CD14-positive monocyte (primary cell): ENCODE measurements at regions of chr16 and their contacts with region 1.

Region 1: GRCh38 chr16:67561824-67562525 is 351 bp upstream of the CTCF start:
- DNase-seq: peak; percentile 98 to 99 (median 98)
- H3K4me3 ChIP-seq: peak overlapping the region; percentile 54 to 89 (median 75)
- H3K4me3 Mint-ChIP-seq: peak overlapping the region; percentile 82 to 91
- H3K27ac ChIP-seq: peak overlapping the region; percentile 75 to 89
- H3K27ac Mint-ChIP-seq: peak overlapping the region; percentile 83 to 94 (median 91)
- H3K4me1 ChIP-seq: peaks cover 29 to 37% of the 10 kb centered on the region in 2 donors
- H3K4me1 Mint-ChIP-seq: peaks cover 36% of the 10 kb centered on the region
- H3K27me3 ChIP-seq: no peaks in the 10 kb centered on the region
- H3K27me3 Mint-ChIP-seq: peaks cover 0 to 2% (median 0%) of the 10 kb centered on the region in 3 donors
- CTCF ChIP-seq: no peak

Region 2: GRCh38 chr16:67490335-67491096 is 71.5 kb before region 1 on chr16:
- intact Hi-C with region 1: loop called in 1 of 2 experiments (anchors 5 kb)
- DNase-seq: peak; percentile 78 to 93 (median 87)
- H3K4me3 ChIP-seq: peak overlapping the region in 1 of 3 experiments; percentile 71
- H3K4me3 Mint-ChIP-seq: peak overlapping the region; percentile 59 to 82
- H3K27ac ChIP-seq: peak overlapping the region; percentile 90 to 97
- H3K27ac Mint-ChIP-seq: peak overlapping the region; percentile 98 to 100 (median 99)
- H3K4me1 ChIP-seq: peaks cover 84 to 93% of the 10 kb centered on the region in 2 donors
- H3K4me1 Mint-ChIP-seq: peaks cover 84% of the 10 kb centered on the region
- H3K27me3 ChIP-seq: no peaks in the 10 kb centered on the region
- H3K27me3 Mint-ChIP-seq: peaks cover 0 to 7% (median 0%) of the 10 kb centered on the region in 3 donors
- CTCF ChIP-seq: no peak

Region 3: DNA sequence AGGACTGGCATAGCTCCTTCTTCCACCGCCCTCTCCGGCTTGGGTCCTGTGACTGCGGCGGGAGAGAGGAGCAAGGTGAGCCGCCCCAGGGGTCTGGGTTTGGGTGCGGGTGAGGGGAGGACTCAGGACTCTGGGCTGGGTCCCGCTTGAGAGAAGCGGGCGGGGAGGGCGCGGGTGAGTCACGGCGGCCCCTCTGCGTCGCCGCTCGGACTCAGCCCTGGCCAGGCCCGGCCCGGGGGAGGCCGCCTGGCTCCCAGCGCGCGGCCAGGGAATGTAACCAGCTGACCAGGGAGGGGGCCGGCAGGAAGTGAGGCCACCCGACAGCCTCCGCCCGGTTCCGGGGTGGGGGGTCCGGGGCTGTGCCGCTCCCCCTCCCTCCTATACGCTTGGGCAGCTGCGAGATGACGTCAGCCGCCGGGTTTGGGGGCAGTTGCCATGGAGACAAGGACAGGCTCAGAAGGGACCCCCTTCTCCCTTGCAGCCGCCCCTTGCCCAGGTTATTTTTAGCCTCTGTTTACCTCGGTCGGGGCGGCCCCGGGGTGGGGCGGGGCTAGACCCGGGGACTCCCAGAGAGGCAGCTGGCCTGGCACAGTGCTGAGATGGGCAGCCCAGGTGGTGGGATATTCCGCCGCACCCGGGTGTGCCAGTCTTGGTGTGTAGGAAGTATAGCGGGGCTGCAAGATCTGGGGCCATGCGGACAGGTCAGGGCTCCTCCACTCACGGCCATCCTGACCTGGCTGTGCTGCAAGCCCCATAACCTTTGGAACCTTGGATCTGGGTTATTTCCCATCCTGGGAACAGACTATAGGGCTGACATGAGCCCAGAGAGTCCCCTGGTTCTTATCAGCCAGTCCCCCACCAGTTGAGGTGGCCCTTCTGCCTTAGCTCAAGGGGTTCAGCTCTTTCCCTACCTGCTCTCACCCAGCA is 31.7 kb before region 1 on chr16:
- intact Hi-C with region 1: loop called in 1 of 2 experiments (anchors 5 kb)
- DNase-seq: peak; percentile 68 to 81 (median 78)
- H3K4me3 ChIP-seq: peak overlapping the region; percentile 58 to 96 (median 88)
- H3K4me3 Mint-ChIP-seq: peak overlapping the region; percentile 94 to 100
- H3K27ac ChIP-seq: peak overlapping the region; percentile 95
- H3K27ac Mint-ChIP-seq: peak overlapping the region; percentile 96 to 98 (median 96)
- H3K4me1 ChIP-seq: peaks cover 40 to 67% of the 10 kb centered on the region in 2 donors
- H3K4me1 Mint-ChIP-seq: peaks cover 55% of the 10 kb centered on the region
- H3K27me3 ChIP-seq: peaks cover 0 to 1% of the 10 kb centered on the region in 2 donors
- H3K27me3 Mint-ChIP-seq: peaks cover 7 to 24% (median 16%) of the 10 kb centered on the region in 3 donors
- CTCF ChIP-seq: no peak

Region 4: GRCh38 chr16:67628216-67628615 is 66.2 kb after region 1 on chr16:
- intact Hi-C with region 1: no loop called
- DNase-seq: no peak
- H3K4me3 ChIP-seq: no peak overlapping the region
- H3K4me3 Mint-ChIP-seq: no peak overlapping the region
- H3K27ac ChIP-seq: no peak overlapping the region
- H3K27ac Mint-ChIP-seq: no peak overlapping the region
- H3K4me1 ChIP-seq: no peaks in the 10 kb centered on the region
- H3K4me1 Mint-ChIP-seq: no peaks in the 10 kb centered on the region
- H3K27me3 ChIP-seq: no peaks in the 10 kb centered on the region
- H3K27me3 Mint-ChIP-seq: peaks cover 0 to 3% (median 0%) of the 10 kb centered on the region in 3 donors
- CTCF ChIP-seq: no peak

Region 5: GRCh38 chr16:67660564-67661028 is 98.6 kb after region 1 on chr16 and contains the start of gene PARD6A:
- intact Hi-C with region 1: loop called (anchors 2 to 5 kb)
- DNase-seq: peak; percentile 95 to 96 (median 96)
- H3K4me3 ChIP-seq: peak within 1 kb of the TSS; percentile 74 to 92 (median 92)
- H3K4me3 Mint-ChIP-seq: peak within 1 kb of the TSS; percentile 90 to 92
- H3K27ac ChIP-seq: peak within 1 kb of the TSS; percentile 87 to 94
- H3K27ac Mint-ChIP-seq: peak within 1 kb of the TSS; percentile 96 to 99 (median 98)
- H3K4me1 ChIP-seq: peaks cover 20 to 30% of the 10 kb centered on the region in 2 donors
- H3K4me1 Mint-ChIP-seq: peaks cover 21% of the 10 kb centered on the region
- H3K27me3 ChIP-seq: peaks cover 0 to 5% of the 10 kb centered on the region in 2 donors
- H3K27me3 Mint-ChIP-seq: peaks cover 8 to 11% (median 10%) of the 10 kb centered on the region in 3 donors
- CTCF ChIP-seq: no peak
- polyA plus RNA-seq, gene PARD6A: 2.7 to 6.9 (median 6.1) TPM

Region 6: DNA sequence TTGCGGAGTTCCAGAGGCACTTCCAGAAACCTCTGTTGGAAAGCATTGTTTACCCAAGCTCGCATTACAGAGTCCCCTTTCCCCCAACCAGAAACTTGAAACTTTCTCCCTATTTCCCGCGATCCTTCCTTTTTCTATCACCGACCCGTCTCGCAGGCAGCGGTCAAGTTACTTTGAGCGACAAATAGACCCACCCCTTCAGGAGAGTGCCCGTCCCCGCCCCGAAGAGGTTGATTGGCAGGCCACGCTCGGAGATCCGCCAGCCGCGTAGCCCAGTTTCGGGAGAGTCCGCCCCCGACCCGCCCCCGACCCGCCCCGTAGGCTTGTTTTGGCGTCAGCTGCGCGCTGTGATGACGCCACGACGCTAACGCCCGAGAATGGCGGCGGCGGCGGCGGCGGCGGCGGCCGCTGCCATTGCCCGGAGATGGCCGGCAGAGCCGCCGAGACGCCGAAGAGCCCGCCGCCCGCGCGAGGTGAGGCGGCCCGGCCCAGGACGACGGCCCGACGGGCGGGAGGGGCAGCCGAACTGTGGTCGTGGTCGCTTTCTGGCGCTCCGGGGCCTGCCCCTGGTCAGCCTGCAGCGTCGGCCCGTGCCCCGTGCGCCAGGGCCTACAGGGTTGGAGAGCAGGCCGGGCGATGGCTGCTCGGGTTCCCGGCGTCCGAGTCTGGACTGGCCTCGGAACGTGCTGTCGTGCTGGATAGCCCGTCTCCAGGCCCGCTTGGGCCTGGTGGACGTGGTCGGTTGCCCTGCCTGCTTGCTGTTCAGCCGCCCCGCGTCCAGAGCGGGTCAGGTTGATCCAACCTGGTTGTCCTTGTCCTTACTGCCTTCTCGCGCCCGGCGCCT is 331.1 kb after region 1 on chr16 and contains the start of gene PSKH1:
- intact Hi-C with region 1: loop called in 1 of 2 experiments (anchors 5 kb)
- DNase-seq: peak; percentile 92 to 94 (median 93)
- H3K4me3 ChIP-seq: peak within 1 kb of the TSS; percentile 58 to 91 (median 90)
- H3K4me3 Mint-ChIP-seq: peak within 1 kb of the TSS; percentile 89 to 95
- H3K27ac ChIP-seq: peak within 1 kb of the TSS; percentile 89 to 97
- H3K27ac Mint-ChIP-seq: peak within 1 kb of the TSS; percentile 93 to 98 (median 95)
- H3K4me1 ChIP-seq: peaks cover 18 to 21% of the 10 kb centered on the region in 2 donors
- H3K4me1 Mint-ChIP-seq: peaks cover 24% of the 10 kb centered on the region
- H3K27me3 ChIP-seq: no peaks in the 10 kb centered on the region
- H3K27me3 Mint-ChIP-seq: no peaks in the 10 kb centered on the region
- CTCF ChIP-seq: no peak
- polyA plus RNA-seq, gene PSKH1: 11.0 to 19.7 (median 16.8) TPM